Esophagus muscularis mucosa (tissue), 4 donors: ENCODE measurements at regions of chr16 and their contacts with region 1.

Region 1: DNA sequence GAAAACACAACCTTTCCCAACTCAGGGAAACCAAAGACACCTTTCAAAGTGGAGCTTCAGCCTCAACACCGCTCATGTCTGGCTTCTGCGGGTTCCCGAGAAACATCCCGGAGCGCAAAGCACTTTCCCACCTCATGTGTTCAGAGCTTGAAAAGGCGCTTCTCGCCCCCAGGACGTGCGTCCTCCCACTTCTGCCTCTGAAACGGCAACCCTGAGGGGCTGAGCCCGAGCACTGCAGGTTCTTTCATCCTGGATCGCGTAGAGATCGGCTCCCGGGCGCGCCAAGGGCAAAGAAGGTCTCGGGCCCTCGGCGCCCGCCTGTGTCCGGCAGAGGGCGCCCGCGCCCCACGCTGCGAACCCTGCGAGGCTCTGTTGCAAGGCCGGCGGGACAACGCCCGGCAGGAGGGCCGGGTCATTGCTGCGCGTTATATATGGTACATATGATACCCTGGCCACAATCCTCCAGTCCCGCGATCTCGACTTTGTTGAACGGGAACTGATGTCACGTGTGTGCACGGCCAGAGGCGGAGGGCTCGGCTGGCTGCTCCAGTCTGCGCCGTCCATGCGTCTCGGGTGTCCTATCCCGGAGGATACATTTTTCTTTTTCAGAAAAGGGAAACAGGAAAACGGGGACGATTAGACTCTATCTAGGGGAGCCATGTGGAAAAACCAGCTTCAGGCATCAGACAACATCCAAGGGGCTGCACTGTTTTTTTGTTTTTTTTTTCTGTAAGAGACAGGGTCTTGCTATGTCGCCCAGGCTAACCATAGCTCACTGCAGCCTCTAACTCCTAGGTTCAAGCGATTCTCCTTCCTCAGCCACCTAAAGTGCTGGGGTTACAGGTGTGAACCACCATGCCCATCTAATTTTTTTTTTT is 19.1 kb downstream of the COQ7 start:
- DNase-seq: peak; percentile 95
- H3K4me3 ChIP-seq: peak overlapping the region; percentile 50 to 64 (median 54)
- H3K27ac ChIP-seq: peak overlapping the region; percentile 36 to 64 (median 55)
- H3K4me1 ChIP-seq: peaks cover 8 to 26% (median 20%) of the 10 kb centered on the region in 4 donors
- H3K27me3 ChIP-seq: no peaks in the 10 kb centered on the region
- CTCF ChIP-seq: peak in 2 of 3 experiments; percentile 95 to 99
- EP300 ChIP-seq: no peak
- POLR2A ChIP-seq: no peak

Region 2: DNA sequence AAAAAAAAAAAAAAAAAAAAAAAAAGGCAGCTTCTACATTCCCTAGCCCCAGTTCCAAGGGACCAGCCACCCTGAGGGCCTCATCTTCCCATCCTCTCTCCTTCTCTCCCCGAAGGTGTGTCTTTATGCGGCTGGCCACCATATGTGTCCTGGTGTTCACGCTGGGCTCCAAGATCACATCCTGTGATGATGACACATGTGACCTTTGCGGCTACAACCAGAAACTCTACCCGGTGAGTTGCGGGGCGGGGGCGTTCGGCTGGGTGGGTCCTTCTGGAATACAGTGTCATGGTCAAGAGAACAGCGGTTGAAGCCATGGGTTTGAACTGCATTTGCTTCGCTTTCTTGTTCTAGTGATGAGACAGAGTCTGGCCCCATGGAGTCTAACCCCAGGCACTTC is 41.8 kb before region 1 on chr16:
- intact Hi-C with region 1: no loop called
- DNase-seq: no peak
- H3K4me3 ChIP-seq: no peak overlapping the region
- H3K27ac ChIP-seq: no peak overlapping the region
- H3K4me1 ChIP-seq: no peaks in the 10 kb centered on the region
- H3K27me3 ChIP-seq: no peaks in the 10 kb centered on the region
- CTCF ChIP-seq: no peak
- EP300 ChIP-seq: no peak
- POLR2A ChIP-seq: no peak

Region 3: DNA sequence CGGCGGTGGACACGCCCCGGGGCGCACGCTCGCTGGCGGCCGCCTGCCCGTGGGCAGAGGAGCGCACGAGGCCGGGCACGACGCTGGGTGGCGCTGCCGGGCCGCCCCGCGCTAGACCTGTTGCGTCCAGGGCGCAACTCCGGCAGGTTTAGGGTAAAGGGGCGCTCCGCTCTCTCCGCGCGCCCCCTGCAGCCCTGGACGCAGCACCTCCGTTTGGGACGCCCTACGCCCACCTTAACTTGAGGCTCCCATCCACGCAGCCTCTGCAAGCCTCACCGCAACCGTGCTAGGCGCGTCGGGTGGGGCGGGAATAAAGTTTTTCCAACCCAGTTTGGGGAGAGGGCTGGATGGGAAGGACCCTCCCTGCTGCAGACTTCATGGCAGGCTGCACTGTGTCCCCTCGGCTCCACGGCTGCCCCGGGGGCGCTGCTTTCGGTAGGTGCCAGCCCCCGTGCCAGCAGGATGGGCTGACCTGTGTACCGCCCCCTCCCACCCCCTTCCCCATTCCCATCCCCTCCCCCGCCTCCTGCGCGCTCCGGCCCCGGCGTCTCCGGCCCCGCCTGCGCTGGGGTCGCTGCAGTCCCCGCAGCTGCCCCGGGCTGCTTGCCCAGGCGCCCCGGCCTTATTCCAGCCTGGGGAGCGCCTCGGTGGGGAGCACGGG is 81.3 kb after region 1 on chr16 and contains the start of gene SYT17:
- intact Hi-C with region 1: loop called (anchors 2 kb)
- DNase-seq: no peak
- H3K4me3 ChIP-seq: peak within 1 kb of the TSS; percentile 61 to 80 (median 66)
- H3K27ac ChIP-seq: peak within 1 kb of the TSS in 3 of 4 donors; percentile 60 to 72 (median 71)
- H3K4me1 ChIP-seq: peaks cover 14 to 25% (median 24%) of the 10 kb centered on the region in 4 donors
- H3K27me3 ChIP-seq: peaks cover 0 to 30% (median 9%) of the 10 kb centered on the region in 4 donors
- CTCF ChIP-seq: peak; percentile 82 to 87 (median 83)
- EP300 ChIP-seq: no peak
- POLR2A ChIP-seq: no peak
- total RNA-seq, gene SYT17: 5.0 to 8.7 (median 6.2) TPM

Region 4: DNA sequence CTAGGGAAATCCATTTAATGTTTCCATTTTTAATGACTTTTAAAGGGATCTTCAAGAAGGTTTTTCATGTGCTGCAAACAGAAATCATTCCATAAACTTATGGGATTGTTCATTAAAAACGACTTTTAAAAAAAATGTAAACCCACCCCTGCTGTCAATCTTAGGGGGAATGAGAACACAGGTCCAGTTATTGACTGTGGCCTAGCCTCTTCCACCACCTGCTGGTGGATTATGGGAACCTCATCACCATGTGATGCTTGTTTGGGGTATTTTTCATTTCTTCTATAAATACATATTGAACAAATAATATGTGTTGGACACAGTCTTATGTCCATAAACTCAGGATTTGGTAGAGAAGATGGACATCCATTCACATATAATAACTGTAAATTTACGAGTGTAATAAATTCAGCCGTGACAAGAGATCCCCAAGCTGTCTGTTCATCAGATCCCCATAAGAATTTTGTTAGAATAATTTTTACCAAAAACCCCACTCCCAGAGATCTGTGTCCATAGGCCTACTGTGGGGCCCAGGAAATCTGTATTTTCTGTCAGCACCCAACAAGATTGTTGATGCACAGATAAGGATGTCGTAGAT is 289.1 kb after region 1 on chr16:
- intact Hi-C with region 1: loop called (anchors 2 kb)
- DNase-seq: no peak
- H3K4me3 ChIP-seq: no peak overlapping the region
- H3K27ac ChIP-seq: no peak overlapping the region
- H3K4me1 ChIP-seq: peaks cover 0 to 10% (median 9%) of the 10 kb centered on the region in 4 donors
- H3K27me3 ChIP-seq: no peaks in the 10 kb centered on the region
- CTCF ChIP-seq: peak; percentile 86 to 94 (median 92)
- EP300 ChIP-seq: no peak
- POLR2A ChIP-seq: no peak

Region 5: GRCh38 chr16:19502395-19503131 is 416.0 kb after region 1 on chr16:
- intact Hi-C with region 1: loop called (anchors 2 kb)
- DNase-seq: peak; percentile 92
- H3K4me3 ChIP-seq: no peak overlapping the region
- H3K27ac ChIP-seq: no peak overlapping the region
- H3K4me1 ChIP-seq: peaks cover 0 to 14% (median 9%) of the 10 kb centered on the region in 4 donors
- H3K27me3 ChIP-seq: no peaks in the 10 kb centered on the region
- CTCF ChIP-seq: peak; percentile 52 to 76 (median 69)
- EP300 ChIP-seq: no peak
- POLR2A ChIP-seq: no peak